Sigmoid colon (tissue), 7 donors: ENCODE measurements at regions of chr9 and their contacts with region 1.

Region 1: GRCh38 chr9:136488247-136489214 is 5.7 kb upstream of the SEC16A start:
- DNase-seq: peak; percentile 85
- H3K4me3 ChIP-seq: no peak overlapping the region
- H3K27ac ChIP-seq: no peak overlapping the region
- H3K4me1 ChIP-seq: peaks cover 0 to 26% (median 18%) of the 10 kb centered on the region in 4 donors
- H3K27me3 ChIP-seq: no peaks in the 10 kb centered on the region
- CTCF ChIP-seq: peak; percentile 92 to 99 (median 98)
- EP300 ChIP-seq: no peak
- POLR2A ChIP-seq: no peak

Region 2: DNA sequence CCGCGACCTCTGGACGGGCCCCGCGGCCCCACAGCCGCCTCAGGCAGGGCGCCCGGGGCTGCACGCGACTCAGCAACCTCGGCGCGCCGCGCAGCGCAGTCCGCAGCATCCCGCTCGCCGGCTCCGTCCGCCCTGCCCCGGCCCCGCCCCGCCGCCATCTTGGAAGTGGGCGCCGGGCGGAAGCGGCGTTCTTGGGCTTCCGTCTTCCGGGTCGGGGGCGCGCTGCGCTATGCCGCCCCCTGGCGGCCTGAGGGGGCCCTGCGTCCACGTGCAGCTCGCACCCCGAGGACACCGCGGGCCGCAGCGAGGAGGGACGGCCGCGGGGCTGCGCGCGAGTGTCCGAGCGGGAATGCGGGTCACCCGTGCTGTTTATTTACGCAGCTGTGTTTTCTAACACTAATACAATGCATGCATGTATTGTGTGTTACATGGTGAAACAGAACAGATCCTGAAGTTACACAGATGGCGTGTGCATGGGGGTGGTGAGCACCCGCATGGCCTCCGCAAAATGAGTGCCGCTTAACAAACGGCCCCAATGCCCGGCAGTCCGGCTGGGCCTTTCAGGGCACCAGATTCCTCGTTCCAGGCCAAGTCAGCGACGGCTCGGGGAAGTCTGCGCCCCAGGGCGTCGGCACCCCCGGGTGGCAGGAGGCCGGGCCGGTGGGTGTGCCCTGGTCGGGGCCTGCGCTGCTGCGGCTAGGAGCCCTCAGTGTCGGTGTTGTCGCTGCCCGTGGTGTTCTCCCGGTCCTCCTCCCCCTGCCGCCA is 124.7 kb before region 1 on chr9 and contains the start of gene DNLZ:
- intact Hi-C with region 1: no loop called
- DNase-seq: peak; percentile 93
- H3K4me3 ChIP-seq: peak within 1 kb of the TSS; percentile 66 to 97 (median 87)
- H3K27ac ChIP-seq: peak within 1 kb of the TSS; percentile 88 to 95 (median 92)
- H3K4me1 ChIP-seq: peaks cover 0 to 39% (median 34%) of the 10 kb centered on the region in 4 donors
- H3K27me3 ChIP-seq: peaks cover 0 to 9% (median 6%) of the 10 kb centered on the region in 3 donors
- CTCF ChIP-seq: peak; percentile 77 to 99 (median 92)
- EP300 ChIP-seq: no peak
- POLR2A ChIP-seq: no peak
- total RNA-seq, gene DNLZ: 19.7 to 41.9 (median 37.8) TPM

Region 3: DNA sequence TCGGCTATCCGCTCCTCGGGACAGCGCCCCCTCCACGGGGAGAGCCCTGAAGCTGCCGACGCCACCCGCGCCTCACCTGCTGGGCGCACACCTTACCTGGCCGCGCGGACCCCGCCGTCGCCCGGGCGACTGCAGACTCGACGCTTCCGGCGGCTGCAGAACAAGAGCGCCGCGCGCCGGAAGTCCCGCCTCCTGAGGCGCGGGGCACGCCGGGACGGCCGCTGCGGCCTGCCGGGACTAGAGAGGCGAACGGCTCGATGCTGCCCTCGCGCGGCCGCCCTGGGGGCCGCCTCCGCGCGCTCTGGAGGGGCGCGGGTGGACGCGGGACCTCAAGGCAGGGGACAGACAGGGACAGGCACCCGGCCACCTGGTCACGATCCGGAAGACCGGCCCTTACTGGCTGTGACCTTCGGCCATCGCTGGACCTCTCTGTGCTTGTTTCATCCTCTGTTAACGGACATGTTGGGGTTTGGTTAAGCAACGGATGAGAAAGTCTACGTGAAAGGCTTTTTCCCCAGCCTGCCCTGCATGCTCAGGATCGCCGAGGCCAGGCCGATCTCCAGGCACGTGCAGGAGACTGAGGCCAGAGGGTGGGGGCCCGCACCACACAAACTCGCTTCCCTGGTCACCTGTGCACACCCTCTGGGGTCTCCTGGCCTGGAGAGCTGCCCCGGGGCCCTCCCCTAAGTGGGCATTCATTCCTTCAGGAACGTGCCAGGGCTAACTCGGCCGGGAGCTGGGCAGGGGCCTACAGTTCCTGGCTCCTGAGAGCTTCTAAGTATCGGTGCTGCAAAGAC is 88.3 kb before region 1 on chr9 and contains the start of gene SNAPC4:
- intact Hi-C with region 1: no loop called
- DNase-seq: peak; percentile 91
- H3K4me3 ChIP-seq: peak within 1 kb of the TSS; percentile 70 to 99 (median 94)
- H3K27ac ChIP-seq: peak within 1 kb of the TSS; percentile 44 to 76 (median 65)
- H3K4me1 ChIP-seq: peaks cover 0 to 29% (median 21%) of the 10 kb centered on the region in 4 donors
- H3K27me3 ChIP-seq: no peaks in the 10 kb centered on the region
- CTCF ChIP-seq: peak; percentile 49 to 95 (median 62)
- EP300 ChIP-seq: no peak
- POLR2A ChIP-seq: peak; percentile 12 to 32
- total RNA-seq, gene SNAPC4: 2.6 to 10.8 (median 5.1) TPM

Region 4: DNA sequence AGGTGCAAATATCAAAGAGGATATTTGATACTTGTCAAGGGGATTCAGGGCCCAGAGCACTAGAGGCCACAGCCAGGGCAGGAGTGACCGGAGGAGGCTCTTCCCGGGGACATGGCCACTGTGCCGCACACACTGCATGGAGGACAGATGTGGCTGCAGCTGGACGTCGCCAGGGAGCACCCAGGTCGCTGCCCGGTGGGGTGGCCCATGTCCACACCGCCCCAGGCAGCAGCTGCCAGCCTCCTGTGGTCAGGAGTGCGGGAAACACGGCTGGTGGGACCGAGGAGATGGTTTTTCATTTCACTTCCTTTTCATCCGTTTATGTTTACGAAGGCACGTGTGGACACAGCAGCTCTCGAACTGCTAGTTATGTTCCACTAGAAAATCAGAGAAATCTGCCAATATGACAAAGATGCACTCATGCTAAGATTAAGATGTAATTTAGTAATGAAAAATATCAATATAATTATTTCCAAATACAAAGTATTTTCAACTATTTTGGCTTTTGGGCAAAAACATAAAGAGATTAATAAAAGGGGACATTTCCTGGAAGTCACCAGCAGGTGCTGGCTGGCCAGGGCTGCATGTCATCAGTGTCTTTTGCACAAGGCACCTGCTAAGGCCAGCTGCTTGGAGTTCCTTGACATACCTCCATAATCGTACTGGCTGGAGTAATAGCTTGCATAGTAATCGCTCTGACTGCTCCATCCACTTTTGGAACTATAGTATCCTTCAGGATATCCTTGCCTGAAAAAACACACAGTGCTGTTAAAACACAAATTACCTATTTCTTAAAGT is 20.6 kb before region 1 on chr9:
- intact Hi-C with region 1: no loop called
- DNase-seq: no peak
- H3K4me3 ChIP-seq: no peak overlapping the region
- H3K27ac ChIP-seq: no peak overlapping the region
- H3K4me1 ChIP-seq: no peaks in the 10 kb centered on the region
- H3K27me3 ChIP-seq: no peaks in the 10 kb centered on the region
- CTCF ChIP-seq: no peak
- EP300 ChIP-seq: no peak
- POLR2A ChIP-seq: no peak

Region 5: GRCh38 chr9:136631038-136632000 is 142.8 kb after region 1 on chr9:
- intact Hi-C with region 1: loop called (anchors 1 kb)
- DNase-seq: peak; percentile 88
- H3K4me3 ChIP-seq: no peak overlapping the region
- H3K27ac ChIP-seq: no peak overlapping the region
- H3K4me1 ChIP-seq: peaks cover 0 to 10% (median 4%) of the 10 kb centered on the region in 4 donors
- H3K27me3 ChIP-seq: peaks cover 0 to 5% (median 0%) of the 10 kb centered on the region in 3 donors
- CTCF ChIP-seq: peak; percentile 76 to 94 (median 89)
- EP300 ChIP-seq: no peak
- POLR2A ChIP-seq: no peak